CD4-positive, alpha-beta T cell (primary cell): ENCODE measurements at regions of chr20 and their contacts with region 1.

Region 1: DNA sequence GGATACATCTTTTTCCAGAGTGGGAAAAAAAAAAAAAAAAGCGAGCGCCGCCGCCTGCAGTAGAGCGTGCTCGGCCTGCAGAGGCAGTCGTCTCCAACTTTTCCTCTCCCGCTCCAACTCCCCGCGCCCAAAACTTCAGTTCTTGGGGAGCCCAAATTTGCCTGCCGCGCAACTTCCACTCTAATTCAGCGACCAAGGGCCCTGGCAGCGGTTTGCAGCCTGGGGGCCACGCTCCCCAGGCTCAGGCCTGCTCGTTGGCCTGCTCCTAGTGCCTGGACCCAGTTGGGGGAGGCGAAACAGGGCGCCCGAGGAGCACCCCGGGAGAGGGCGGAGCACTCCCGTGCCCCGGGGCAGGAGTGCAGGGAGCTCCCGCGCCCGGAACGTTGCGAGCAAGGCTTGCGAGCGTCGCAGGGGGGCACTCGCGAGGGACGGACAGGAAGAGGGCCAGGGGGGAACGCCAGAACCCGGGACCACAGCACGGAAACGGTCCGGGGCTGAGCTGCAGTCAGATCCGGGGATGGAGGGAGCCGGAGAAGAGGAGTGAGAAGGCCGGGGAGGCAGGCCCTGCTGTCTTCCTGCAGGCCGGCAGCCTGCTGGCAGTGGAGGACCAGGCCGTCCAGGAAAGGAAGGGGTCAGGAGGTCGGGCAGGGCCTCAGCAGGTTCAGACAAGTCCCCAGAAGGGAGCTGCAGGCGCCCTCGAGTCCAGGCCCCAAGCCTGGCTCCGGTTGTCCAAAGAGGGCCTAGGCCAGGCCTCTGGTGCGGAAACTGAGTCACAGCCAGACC is at the start of gene STX16:
- DNase-seq: peak; percentile 76 to 95 (median 86)
- ATAC-seq: peak; percentile 66
- H3K4me3 ChIP-seq: peak within 1 kb of the TSS; percentile 74
- H3K4me3 Mint-ChIP-seq: peak within 1 kb of the TSS; percentile 99
- H3K27ac ChIP-seq: peak within 1 kb of the TSS; percentile 91 to 93
- H3K27ac Mint-ChIP-seq: peak within 1 kb of the TSS; percentile 100
- H3K4me1 ChIP-seq: peaks cover 37% of the 10 kb centered on the region
- H3K4me1 Mint-ChIP-seq: peaks cover 28% of the 10 kb centered on the region
- H3K27me3 ChIP-seq: no peaks in the 10 kb centered on the region
- H3K27me3 Mint-ChIP-seq: no peaks in the 10 kb centered on the region
- CTCF ChIP-seq: peak; percentile 76
- total RNA-seq, gene STX16: 179 to 181 TPM

Region 2: GRCh38 chr20:57709931-57710799 is 940.8 kb before region 1 on chr20 and contains the start of gene PMEPA1:
- CTCF ChIA-PET with region 1: no interaction called
- POLR2A ChIA-PET with region 1: no interaction called
- intact Hi-C with region 1: loop called (anchors 5 kb)
- DNase-seq: peak; percentile 85 to 98 (median 94)
- ATAC-seq: peak; percentile 84
- H3K4me3 ChIP-seq: peak within 1 kb of the TSS; percentile 87
- H3K4me3 Mint-ChIP-seq: peak within 1 kb of the TSS; percentile 97
- H3K27ac ChIP-seq: peak within 1 kb of the TSS; percentile 75 to 84
- H3K27ac Mint-ChIP-seq: peak within 1 kb of the TSS; percentile 95
- H3K4me1 ChIP-seq: peaks cover 32% of the 10 kb centered on the region
- H3K4me1 Mint-ChIP-seq: peaks cover 50% of the 10 kb centered on the region
- H3K27me3 ChIP-seq: peaks cover 0 to 3% of the 10 kb centered on the region in 2 experiments
- H3K27me3 Mint-ChIP-seq: no peaks in the 10 kb centered on the region
- CTCF ChIP-seq: peak; percentile 1
- total RNA-seq, gene PMEPA1: 15.7 to 18.0 TPM

Region 3: DNA sequence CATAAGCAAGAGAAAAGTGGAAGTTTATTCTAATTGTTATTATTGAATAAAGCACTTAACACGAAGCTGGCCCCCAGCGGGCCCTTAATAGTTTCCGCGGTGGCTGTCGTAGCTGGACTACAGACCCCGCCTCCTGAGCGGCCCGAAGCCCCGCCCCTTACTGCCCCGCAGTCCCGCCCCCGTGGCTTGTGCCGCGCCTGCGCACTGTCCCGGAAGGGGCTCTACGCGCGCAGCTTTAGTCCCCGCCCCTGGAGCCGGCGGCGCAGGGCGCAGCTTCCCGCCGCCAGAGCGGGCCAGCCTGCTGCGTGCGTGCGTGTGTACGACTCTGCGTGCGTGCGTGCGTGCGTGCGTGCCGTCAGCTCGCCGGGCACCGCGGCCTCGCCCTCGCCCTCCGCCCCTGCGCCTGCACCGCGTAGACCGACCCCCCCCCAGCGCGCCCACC is 262.1 kb before region 1 on chr20 and contains the start of gene VAPB:
- CTCF ChIA-PET with region 1: interaction called, 4 read pairs
- POLR2A ChIA-PET with region 1: interaction called, 26 read pairs
- intact Hi-C with region 1: loop called in 1 of 2 experiments (anchors 5 kb)
- DNase-seq: peak; percentile 93 to 99 (median 96)
- ATAC-seq: peak; percentile 95
- H3K4me3 ChIP-seq: peak within 1 kb of the TSS; percentile 81
- H3K4me3 Mint-ChIP-seq: peak within 1 kb of the TSS; percentile 96
- H3K27ac ChIP-seq: peak within 1 kb of the TSS; percentile 94 to 98
- H3K27ac Mint-ChIP-seq: peak within 1 kb of the TSS; percentile 92
- H3K4me1 ChIP-seq: peaks cover 31% of the 10 kb centered on the region
- H3K4me1 Mint-ChIP-seq: peaks cover 43% of the 10 kb centered on the region
- H3K27me3 ChIP-seq: peaks cover 0 to 4% of the 10 kb centered on the region in 2 experiments
- H3K27me3 Mint-ChIP-seq: no peaks in the 10 kb centered on the region
- CTCF ChIP-seq: no peak
- total RNA-seq, gene VAPB: 25.2 to 29.4 TPM

Region 4: GRCh38 chr20:58667975-58668374 is 17.0 kb after region 1 on chr20:
- CTCF ChIA-PET with region 1: interaction called, 62 read pairs
- POLR2A ChIA-PET with region 1: interaction called, 18 read pairs
- intact Hi-C with region 1: no loop called
- DNase-seq: no peak
- ATAC-seq: no peak
- H3K4me3 ChIP-seq: no peak overlapping the region
- H3K4me3 Mint-ChIP-seq: no peak overlapping the region
- H3K27ac ChIP-seq: no peak overlapping the region
- H3K27ac Mint-ChIP-seq: no peak overlapping the region
- H3K4me1 ChIP-seq: peaks cover 4% of the 10 kb centered on the region
- H3K4me1 Mint-ChIP-seq: peaks cover 35% of the 10 kb centered on the region
- H3K27me3 ChIP-seq: no peaks in the 10 kb centered on the region
- H3K27me3 Mint-ChIP-seq: no peaks in the 10 kb centered on the region
- CTCF ChIP-seq: no peak

Region 5: DNA sequence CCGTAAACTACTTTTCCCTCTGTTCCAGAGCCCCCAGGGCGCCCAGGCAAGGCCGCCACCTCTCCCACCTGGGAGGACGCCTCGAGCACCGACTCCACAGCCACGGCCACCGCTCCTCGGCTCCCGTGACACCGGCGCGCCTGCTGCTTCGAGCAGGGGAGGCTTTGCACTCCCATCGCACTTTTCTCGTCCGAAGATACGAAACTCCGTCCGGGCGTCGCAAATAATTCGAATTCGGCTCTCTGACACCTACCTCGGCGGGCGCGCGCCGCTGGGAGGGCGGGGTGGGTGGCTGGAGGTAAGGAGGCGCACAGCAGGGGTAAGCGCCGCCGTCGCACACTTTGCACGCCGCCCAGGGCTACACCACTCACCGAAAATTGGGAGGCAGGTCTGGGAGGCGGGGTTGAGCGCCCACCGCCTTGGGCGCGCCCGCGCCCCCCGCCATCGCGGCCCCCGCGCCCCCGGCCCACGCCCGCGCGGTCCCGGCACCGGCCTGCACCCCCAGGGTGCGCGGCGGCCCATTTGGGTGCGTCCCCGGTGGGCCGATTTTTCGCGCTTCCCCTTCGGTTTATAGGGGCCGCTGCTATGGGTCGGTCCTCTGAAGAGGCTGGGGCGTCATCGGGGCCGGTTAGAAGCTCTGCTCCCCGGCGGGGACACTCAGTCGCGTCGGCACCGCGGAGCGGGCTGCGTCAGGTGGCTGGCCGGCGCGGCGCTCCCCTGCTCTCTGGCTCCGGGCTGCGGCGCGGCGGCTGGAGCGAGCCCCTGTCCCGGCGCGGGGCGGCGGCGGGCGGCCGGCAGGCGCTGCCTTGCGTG is 237.8 kb after region 1 on chr20:
- CTCF ChIA-PET with region 1: no interaction called
- POLR2A ChIA-PET with region 1: interaction called, 28 read pairs
- intact Hi-C with region 1: loop called (anchors 5 kb)
- DNase-seq: peak; percentile 69 to 93 (median 82)
- ATAC-seq: peak; percentile 49
- H3K4me3 ChIP-seq: peak overlapping the region; percentile 83
- H3K4me3 Mint-ChIP-seq: peak overlapping the region; percentile 89
- H3K27ac ChIP-seq: peak overlapping the region; percentile 65 to 72
- H3K27ac Mint-ChIP-seq: peak overlapping the region; percentile 95
- H3K4me1 ChIP-seq: peaks cover 11% of the 10 kb centered on the region
- H3K4me1 Mint-ChIP-seq: peaks cover 52% of the 10 kb centered on the region
- H3K27me3 ChIP-seq: no peaks in the 10 kb centered on the region
- H3K27me3 Mint-ChIP-seq: no peaks in the 10 kb centered on the region
- CTCF ChIP-seq: no peak

Region 6: GRCh38 chr20:59159493-59160376 is 508.8 kb after region 1 on chr20:
- CTCF ChIA-PET with region 1: no interaction called
- POLR2A ChIA-PET with region 1: no interaction called
- intact Hi-C with region 1: loop called in 1 of 2 experiments (anchors 5 kb)
- DNase-seq: peak; percentile 47 to 93 (median 66)
- ATAC-seq: peak; percentile 81
- H3K4me3 ChIP-seq: peak overlapping the region; percentile 70
- H3K4me3 Mint-ChIP-seq: peak overlapping the region; percentile 89
- H3K27ac ChIP-seq: peak overlapping the region; percentile 94 to 95
- H3K27ac Mint-ChIP-seq: peak overlapping the region; percentile 95
- H3K4me1 ChIP-seq: peaks cover 68% of the 10 kb centered on the region
- H3K4me1 Mint-ChIP-seq: peaks cover 98% of the 10 kb centered on the region
- H3K27me3 ChIP-seq: no peaks in the 10 kb centered on the region
- H3K27me3 Mint-ChIP-seq: no peaks in the 10 kb centered on the region
- CTCF ChIP-seq: no peak

Region 7: GRCh38 chr20:59495894-59496510 is 845.0 kb after region 1 on chr20:
- CTCF ChIA-PET with region 1: interaction called, 3 read pairs
- POLR2A ChIA-PET with region 1: no interaction called
- intact Hi-C with region 1: loop called in 1 of 2 experiments (anchors 10 kb)
- DNase-seq: peak; percentile 47 to 77 (median 60)
- ATAC-seq: peak; percentile 59
- H3K4me3 ChIP-seq: no peak overlapping the region
- H3K4me3 Mint-ChIP-seq: no peak overlapping the region
- H3K27ac ChIP-seq: no peak overlapping the region
- H3K27ac Mint-ChIP-seq: no peak overlapping the region
- H3K4me1 ChIP-seq: peaks cover 5% of the 10 kb centered on the region
- H3K4me1 Mint-ChIP-seq: no peaks in the 10 kb centered on the region
- H3K27me3 ChIP-seq: peaks cover 4 to 16% of the 10 kb centered on the region in 2 experiments
- H3K27me3 Mint-ChIP-seq: peaks cover 43% of the 10 kb centered on the region
- CTCF ChIP-seq: peak; percentile 89